Activated naive CD4-positive, alpha-beta T cell treated with anti-CD3 and anti-CD28 coated beads, Interleukin-2, amount 10 ng/mL, durations not matched to agents 7 days and 5 days (primary cell): ENCODE measurements at regions of chr2 and their contacts with region 1.

Region 1: GRCh38 chr2:165203689-165204559 is at the start of gene SCN3A:
- DNase-seq: no peak
- H3K4me3 Mint-ChIP-seq: no peak within 1 kb of the TSS
- H3K27ac Mint-ChIP-seq: no peak within 1 kb of the TSS
- H3K4me1 Mint-ChIP-seq: no peaks in the 10 kb centered on the region
- H3K27me3 Mint-ChIP-seq: peaks cover 4% of the 10 kb centered on the region

Region 2: DNA sequence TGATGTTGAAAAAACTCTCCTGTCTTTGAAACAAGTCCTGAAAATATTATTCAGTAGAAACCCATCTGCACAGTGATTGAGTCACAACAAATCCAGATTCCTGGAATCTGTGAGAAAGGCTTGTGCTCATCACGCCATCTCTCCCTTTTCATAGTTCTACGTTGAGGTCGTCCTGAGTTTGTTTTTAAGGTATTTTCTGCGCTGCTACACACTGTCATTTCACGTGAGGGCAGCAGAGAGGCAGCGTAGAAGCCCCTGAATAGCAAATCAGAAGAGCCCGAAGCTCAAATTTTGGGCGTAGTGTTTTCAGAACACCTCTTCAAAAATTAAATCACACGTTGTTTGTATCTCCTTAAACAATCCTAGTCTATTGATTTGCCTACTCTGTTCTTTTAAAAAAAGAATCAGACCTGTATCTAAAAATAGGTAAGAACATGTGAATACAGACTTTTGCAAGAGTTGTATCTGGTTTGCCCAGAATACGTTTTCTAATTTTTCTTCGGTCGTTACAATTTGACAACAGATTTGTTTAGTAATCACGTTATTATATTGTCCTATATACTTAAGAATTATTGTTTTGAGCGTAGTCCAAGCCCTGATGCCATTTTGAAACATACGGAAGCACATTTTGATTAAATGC is 187.0 kb before region 1 on chr2:
- CTCF ChIA-PET with region 1: interaction called, 10 read pairs
- DNase-seq: no peak
- H3K4me3 Mint-ChIP-seq: no peak overlapping the region
- H3K27ac Mint-ChIP-seq: no peak overlapping the region
- H3K4me1 Mint-ChIP-seq: no peaks in the 10 kb centered on the region
- H3K27me3 Mint-ChIP-seq: no peaks in the 10 kb centered on the region

Region 3: DNA sequence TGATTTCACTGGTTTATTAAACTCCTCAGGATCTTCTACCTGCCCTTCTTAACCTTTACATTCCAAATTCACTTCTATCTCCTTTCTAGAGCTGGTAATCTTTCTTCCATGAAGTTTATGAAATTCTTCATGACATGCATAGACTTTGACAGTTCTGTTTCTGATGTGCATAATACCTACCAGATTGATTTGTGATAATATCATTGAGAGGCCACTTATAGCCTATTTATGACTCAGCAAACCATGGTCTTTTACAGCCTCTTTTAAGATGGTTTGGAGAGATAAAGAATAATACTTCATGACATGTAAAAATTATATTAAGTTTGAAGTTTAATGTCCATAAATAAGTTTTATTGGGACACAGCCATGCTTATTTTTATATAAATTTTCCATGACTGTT is 49.3 kb after region 1 on chr2:
- CTCF ChIA-PET with region 1: no interaction called
- DNase-seq: no peak
- H3K4me3 Mint-ChIP-seq: no peak overlapping the region
- H3K27ac Mint-ChIP-seq: no peak overlapping the region
- H3K4me1 Mint-ChIP-seq: no peaks in the 10 kb centered on the region
- H3K27me3 Mint-ChIP-seq: no peaks in the 10 kb centered on the region